CD4-positive, alpha-beta memory T cell (primary cell): ENCODE measurements at regions of chr9 and their contacts with region 1.

Region 1: DNA sequence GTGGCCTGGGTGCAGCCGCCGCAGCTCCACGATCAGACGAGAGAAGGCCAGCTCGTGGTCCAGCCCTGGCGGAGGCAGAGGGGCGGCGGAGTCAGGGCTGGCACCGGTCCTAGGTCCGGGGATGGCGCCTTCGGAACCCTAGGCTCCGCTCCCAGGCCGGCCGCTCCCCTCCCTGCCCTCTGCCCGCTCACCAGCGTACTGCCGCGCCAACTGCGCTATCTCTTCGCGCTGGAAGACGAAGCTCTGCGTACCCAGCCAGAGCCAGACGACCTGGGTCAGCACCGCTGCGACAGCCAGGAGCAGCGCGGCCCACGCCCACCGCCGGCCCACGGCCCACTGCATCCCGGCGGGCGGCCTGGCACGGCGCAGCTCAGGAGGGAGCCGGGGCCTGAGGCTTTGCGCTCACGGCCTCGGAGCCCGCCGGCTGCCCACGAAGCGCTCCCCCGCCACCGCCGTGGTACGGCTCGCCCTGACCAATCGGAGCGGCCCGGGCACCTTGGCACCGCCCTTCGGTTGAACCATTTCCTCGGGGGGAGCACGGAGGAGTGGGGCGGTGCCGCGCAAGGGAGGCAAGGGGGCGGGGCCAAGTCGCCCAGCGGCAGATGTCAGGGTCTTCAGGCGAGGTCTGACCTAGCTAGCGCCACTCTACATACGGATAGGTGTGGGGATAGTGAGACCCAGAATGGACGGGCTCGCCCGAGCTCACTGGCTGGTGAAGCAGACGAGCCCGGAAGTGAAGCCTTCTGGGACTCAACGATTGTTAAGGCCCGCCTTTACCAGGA is at the start of gene SIGMAR1:
- DNase-seq: peak; percentile 91 to 97 (median 94)
- H3K4me3 ChIP-seq: peak within 1 kb of the TSS; percentile 74 to 84
- H3K4me3 Mint-ChIP-seq: peak within 1 kb of the TSS; percentile 87 to 92 (median 91)
- H3K27ac ChIP-seq: peak within 1 kb of the TSS; percentile 78
- H3K27ac Mint-ChIP-seq: peak within 1 kb of the TSS; percentile 93 to 97 (median 95)
- H3K4me1 ChIP-seq: peaks cover 38% of the 10 kb centered on the region
- H3K4me1 Mint-ChIP-seq: peaks cover 22 to 51% (median 34%) of the 10 kb centered on the region in 4 donors
- H3K27me3 ChIP-seq: no peaks in the 10 kb centered on the region
- H3K27me3 Mint-ChIP-seq: no peaks in the 10 kb centered on the region
- total RNA-seq, gene SIGMAR1: 56.1 to 59.5 TPM

Region 2: DNA sequence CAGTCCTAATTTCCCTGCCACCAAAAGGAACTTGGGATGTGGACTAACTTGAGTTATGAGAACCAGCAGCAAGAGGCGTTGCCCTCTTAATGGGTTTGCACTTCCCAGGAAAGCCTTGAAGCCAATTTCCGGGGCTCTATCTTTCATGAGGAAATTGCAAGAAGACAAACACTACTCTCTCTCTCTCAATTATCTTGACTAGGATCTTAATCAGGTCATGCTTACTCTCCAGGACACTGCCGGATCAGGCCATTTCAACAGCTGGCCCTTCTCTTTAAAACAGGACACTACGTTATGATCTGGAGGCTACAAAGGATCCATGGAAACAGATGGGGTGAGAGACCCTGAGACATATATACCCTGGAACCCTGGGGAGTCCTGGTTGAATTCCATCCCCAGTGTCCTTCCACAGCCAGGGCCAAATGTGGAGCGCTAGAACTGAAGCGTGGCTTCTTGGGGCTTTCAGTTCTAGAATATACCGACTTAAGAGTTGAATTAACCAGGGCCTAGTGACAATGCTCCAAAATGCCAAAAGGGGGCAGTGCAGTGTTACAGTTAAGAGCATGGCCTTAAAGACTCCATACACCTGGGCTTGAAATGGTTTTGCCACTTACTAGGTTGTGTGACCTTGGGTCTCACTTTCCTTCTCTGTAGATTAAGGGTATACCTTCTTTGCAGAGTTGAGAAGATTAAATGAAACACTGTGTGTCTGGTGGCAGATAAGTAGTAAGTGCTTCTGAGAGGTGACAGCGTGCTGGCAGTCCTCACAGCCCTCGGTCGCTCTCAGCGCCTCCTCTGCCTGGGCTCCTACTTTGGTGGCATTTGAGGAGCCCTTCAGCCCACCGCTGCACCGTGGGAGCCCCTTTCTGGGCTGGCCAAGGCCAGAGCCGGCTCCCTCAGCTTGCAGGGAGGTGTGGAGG is 200.3 kb before region 1 on chr9:
- CTCF ChIA-PET with region 1: interaction called, 3 read pairs
- POLR2A ChIA-PET with region 1: no interaction called
- intact Hi-C with region 1: loop called (anchors 1 kb)
- DNase-seq: peak; percentile 65 to 69 (median 67)
- H3K4me3 ChIP-seq: no peak overlapping the region
- H3K4me3 Mint-ChIP-seq: no peak overlapping the region
- H3K27ac ChIP-seq: no peak overlapping the region
- H3K27ac Mint-ChIP-seq: no peak overlapping the region
- H3K4me1 ChIP-seq: peaks cover 11% of the 10 kb centered on the region
- H3K4me1 Mint-ChIP-seq: peaks cover 12 to 18% (median 13%) of the 10 kb centered on the region in 4 donors
- H3K27me3 ChIP-seq: no peaks in the 10 kb centered on the region
- H3K27me3 Mint-ChIP-seq: no peaks in the 10 kb centered on the region

Region 3: DNA sequence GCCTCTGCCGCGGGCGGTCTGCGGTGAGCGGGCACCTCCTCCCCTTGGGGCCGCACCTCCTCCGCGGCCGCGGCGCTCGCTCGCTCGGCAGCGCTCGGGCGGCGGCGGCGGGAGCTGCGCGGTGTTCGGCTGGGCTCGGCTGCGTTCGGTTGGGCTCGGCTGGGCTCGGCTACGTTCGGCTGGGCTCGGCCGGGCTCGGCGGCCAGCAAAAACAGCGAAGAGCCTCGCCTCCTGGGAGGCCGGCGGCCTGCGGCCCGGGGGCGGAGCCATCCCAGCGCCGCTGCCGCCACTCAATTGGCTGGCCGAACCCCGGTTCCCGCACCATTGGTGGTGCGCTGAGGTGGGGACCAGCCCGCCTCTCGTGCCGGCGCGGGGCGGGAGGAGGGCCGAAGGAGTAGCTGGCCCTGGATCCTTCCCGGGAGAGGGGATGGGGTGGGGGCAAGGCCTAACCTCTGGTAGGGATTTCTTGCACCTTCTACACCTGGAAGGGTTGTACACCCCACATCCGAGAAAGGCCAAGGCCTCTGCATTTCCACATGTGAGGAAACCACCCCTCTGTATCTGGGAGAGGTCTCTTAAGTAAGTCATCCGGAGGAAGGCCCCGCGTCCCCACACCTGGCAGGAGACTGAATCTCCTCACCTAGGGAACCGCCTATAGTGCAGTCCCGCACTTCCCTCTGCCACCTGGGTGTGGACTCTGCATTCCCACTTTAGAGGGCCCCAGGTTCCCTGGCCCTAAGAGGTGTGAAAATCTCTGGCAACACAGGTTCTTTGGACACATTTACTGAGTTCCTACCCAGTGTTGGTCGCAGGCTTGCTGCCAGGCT is 114.4 kb before region 1 on chr9 and contains the start of gene ENHO:
- CTCF ChIA-PET with region 1: interaction called, 3 read pairs
- POLR2A ChIA-PET with region 1: interaction called, 4 read pairs
- intact Hi-C with region 1: loop called (anchors 5 kb)
- DNase-seq: peak; percentile 85 to 96 (median 91)
- H3K4me3 ChIP-seq: peak within 1 kb of the TSS; percentile 29 to 58
- H3K4me3 Mint-ChIP-seq: peak within 1 kb of the TSS; percentile 54 to 89 (median 81)
- H3K27ac ChIP-seq: peak within 1 kb of the TSS; percentile 44
- H3K27ac Mint-ChIP-seq: peak within 1 kb of the TSS in 5 of 7 donors; percentile 50 to 85 (median 68)
- H3K4me1 ChIP-seq: peaks cover 12% of the 10 kb centered on the region
- H3K4me1 Mint-ChIP-seq: peaks cover 6 to 13% (median 8%) of the 10 kb centered on the region in 4 donors
- H3K27me3 ChIP-seq: no peaks in the 10 kb centered on the region
- H3K27me3 Mint-ChIP-seq: peaks cover 1 to 5% of the 10 kb centered on the region in 2 donors
- total RNA-seq, gene ENHO: not detected

Region 4: DNA sequence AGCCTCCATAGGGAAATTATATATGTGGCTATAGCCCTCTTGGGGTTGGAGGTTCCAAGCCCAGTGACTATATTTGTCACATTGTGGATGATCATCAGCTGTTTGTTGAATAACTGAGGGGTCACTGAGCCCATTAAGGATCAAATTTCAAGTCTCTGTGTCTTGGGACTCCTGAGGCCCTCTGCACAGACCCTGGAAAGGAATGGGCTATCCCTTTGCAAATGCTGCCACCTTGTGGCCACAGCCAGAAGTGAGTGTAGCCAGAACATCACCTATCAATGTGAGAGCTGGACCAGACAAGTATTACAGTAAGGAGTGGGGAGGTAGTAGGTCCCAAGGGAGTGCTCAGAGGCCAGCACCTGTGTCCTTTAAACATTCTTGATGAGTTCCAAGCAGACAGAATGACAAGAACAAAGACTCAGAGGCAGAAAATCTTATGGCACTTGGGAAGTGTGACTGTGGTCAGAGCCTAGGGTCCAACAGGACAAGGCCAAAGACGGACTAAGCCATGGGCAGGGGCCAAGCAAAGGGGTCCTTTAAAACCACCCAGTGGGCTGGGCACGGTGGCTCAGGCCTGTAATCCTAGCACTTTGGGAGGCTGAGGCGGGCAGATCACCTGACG is 33.8 kb before region 1 on chr9:
- CTCF ChIA-PET with region 1: interaction called, 70 read pairs
- POLR2A ChIA-PET with region 1: interaction called, 6 read pairs
- intact Hi-C with region 1: loop called (anchors 5 kb)
- DNase-seq: peak; percentile 67 to 78 (median 74)
- H3K4me3 ChIP-seq: no peak overlapping the region
- H3K4me3 Mint-ChIP-seq: no peak overlapping the region
- H3K27ac ChIP-seq: no peak overlapping the region
- H3K27ac Mint-ChIP-seq: no peak overlapping the region
- H3K4me1 ChIP-seq: no peaks in the 10 kb centered on the region
- H3K4me1 Mint-ChIP-seq: peaks cover 0 to 2% (median 0%) of the 10 kb centered on the region in 4 donors
- H3K27me3 ChIP-seq: no peaks in the 10 kb centered on the region
- H3K27me3 Mint-ChIP-seq: peaks cover 0 to 3% of the 10 kb centered on the region in 2 donors

Region 5: DNA sequence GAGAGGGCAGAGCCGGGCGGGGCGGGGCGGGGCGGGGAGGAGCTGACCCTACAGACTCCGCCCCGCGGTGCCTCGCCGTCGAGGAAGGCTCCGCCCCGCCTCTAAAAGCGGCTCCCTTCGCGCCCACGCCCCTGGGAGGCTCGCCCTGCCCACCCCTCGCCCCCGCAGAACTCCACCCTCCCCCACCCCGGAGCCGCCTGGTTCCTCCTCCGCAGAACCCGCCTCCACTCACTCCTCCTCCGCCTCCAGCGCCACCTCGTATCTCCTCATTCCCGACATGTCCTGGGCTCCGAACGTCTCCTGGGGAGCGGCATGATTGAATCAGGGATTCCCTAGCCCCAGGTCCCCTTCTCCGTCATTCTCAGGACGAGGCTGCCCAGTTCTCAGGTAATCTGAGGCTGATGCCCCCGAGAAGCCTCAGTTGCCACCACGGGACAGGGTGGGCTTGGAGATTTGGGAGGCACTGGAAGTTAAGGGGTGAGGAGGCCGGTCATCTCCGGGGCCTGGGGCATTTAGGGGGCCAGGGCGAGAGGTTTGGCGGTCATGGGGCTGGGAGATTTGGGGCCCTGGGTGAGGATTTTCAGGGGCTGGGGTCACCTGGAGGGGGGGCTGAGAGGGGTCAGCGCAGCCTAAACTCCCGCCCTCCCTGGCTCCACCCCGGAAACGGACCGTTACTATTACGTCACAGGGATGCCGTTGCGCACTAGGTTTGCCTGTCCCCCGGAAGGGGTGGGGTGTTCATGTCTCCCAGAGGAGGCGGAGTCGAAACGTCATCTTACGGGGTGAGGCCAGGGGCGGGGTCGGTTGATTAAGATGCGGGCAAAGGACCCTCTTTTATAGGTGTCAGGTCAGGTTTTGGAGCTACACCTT is 28.1 kb after region 1 on chr9:
- CTCF ChIA-PET with region 1: interaction called, 168 read pairs
- POLR2A ChIA-PET with region 1: interaction called, 484 read pairs
- intact Hi-C with region 1: loop called (anchors 1 kb)
- DNase-seq: peak; percentile 87 to 94 (median 89)
- H3K4me3 ChIP-seq: peak overlapping the region; percentile 75 to 95
- H3K4me3 Mint-ChIP-seq: peak overlapping the region; percentile 85 to 97 (median 93)
- H3K27ac ChIP-seq: peak overlapping the region; percentile 98
- H3K27ac Mint-ChIP-seq: peak overlapping the region; percentile 95 to 99 (median 99)
- H3K4me1 ChIP-seq: peaks cover 59% of the 10 kb centered on the region
- H3K4me1 Mint-ChIP-seq: peaks cover 41 to 65% (median 53%) of the 10 kb centered on the region in 4 donors
- H3K27me3 ChIP-seq: no peaks in the 10 kb centered on the region
- H3K27me3 Mint-ChIP-seq: no peaks in the 10 kb centered on the region